PC-3 (cell line): ENCODE measurements at regions of chr2 and their contacts with region 1.

Region 1: GRCh38 chr2:112481050-112481527 is 867 bp upstream of the TTL start:
- DNase-seq: peak; percentile 86
- ATAC-seq: peak; percentile 79
- H3K4me3 ChIP-seq: peak overlapping the region; percentile 82
- H3K27ac ChIP-seq: peak overlapping the region; percentile 52
- H3K4me1 ChIP-seq: peaks cover 17% of the 10 kb centered on the region
- H3K27me3 ChIP-seq: no peaks in the 10 kb centered on the region
- CTCF ChIP-seq: peak; percentile 75

Region 2: GRCh38 chr2:112493048-112493447 is 12.0 kb after region 1 on chr2:
- CTCF ChIA-PET with region 1: interaction called, 12 read pairs
- POLR2A ChIA-PET with region 1: no interaction called
- intact Hi-C with region 1: no loop called
- DNase-seq: peak; percentile 25
- ATAC-seq: peak; percentile 30
- H3K4me3 ChIP-seq: no peak overlapping the region; the same call in 1 of the 2 replicates
- H3K27ac ChIP-seq: peak overlapping the region; percentile 84
- H3K4me1 ChIP-seq: peaks cover 44% of the 10 kb centered on the region
- H3K27me3 ChIP-seq: no peaks in the 10 kb centered on the region
- CTCF ChIP-seq: peak; percentile 32

Region 3: GRCh38 chr2:112519506-112519905 is 38.4 kb after region 1 on chr2:
- CTCF ChIA-PET with region 1: no interaction called
- POLR2A ChIA-PET with region 1: no interaction called
- intact Hi-C with region 1: no loop called
- DNase-seq: no peak
- ATAC-seq: no peak
- H3K4me3 ChIP-seq: no peak overlapping the region
- H3K27ac ChIP-seq: no peak overlapping the region
- H3K4me1 ChIP-seq: no peaks in the 10 kb centered on the region
- H3K27me3 ChIP-seq: no peaks in the 10 kb centered on the region
- CTCF ChIP-seq: no peak

Region 4: GRCh38 chr2:112542123-112542983 is 61.3 kb after region 1 on chr2 and contains the start of gene POLR1B:
- CTCF ChIA-PET with region 1: no interaction called
- POLR2A ChIA-PET with region 1: no interaction called
- intact Hi-C with region 1: loop called (anchors 1 kb)
- DNase-seq: peak; percentile 89
- ATAC-seq: peak; percentile 88
- H3K4me3 ChIP-seq: peak within 1 kb of the TSS; percentile 84
- H3K27ac ChIP-seq: peak within 1 kb of the TSS; percentile 79
- H3K4me1 ChIP-seq: peaks cover 16% of the 10 kb centered on the region
- H3K27me3 ChIP-seq: no peaks in the 10 kb centered on the region
- CTCF ChIP-seq: no peak
- total RNA-seq, gene POLR1B: 31.6 and 31.7 TPM in 2 replicates

Region 5: DNA sequence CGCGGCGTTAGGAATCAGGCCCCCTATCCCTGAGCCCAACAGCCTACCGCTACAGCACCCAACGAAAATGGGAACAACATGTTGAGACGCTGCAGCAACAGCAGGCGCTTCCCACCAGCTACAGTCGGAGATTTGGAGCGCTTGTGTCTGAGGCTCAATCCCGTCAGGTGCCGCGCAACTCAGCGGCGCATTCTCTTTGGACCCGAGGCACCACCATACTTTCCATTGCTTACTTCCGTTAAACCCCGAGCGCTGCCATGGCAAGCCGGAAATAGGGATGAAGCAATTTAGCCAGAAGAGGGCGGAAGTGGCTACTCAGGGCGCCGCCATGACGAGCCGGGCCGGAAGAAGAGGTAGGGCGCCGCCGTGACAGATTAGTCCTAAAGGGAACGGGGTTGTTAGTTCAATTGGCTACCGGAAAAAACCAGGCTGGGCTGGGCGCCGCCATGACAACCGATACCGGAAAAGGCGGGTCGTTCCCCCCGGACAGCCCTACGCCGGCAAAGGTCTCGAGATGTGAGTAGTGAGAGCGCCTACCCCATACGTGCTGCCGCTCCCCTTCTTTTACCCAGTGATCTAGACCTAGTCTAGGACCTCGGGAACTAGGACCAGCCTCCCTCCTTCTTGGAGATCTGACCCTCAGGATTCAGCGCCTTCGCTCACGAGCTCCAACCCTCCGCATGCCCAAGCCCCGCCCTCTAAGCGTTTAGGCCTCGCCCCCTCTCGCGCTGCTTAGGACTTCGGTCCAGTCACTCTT is 103.2 kb after region 1 on chr2 and contains the start of gene CHCHD5:
- CTCF ChIA-PET with region 1: interaction called, 16 read pairs
- POLR2A ChIA-PET with region 1: no interaction called
- intact Hi-C with region 1: loop called (anchors 1 kb)
- DNase-seq: peak; percentile 94
- ATAC-seq: peak; percentile 83
- H3K4me3 ChIP-seq: peak within 1 kb of the TSS; percentile 86
- H3K27ac ChIP-seq: peak within 1 kb of the TSS; percentile 95
- H3K4me1 ChIP-seq: peaks cover 31% of the 10 kb centered on the region
- H3K27me3 ChIP-seq: no peaks in the 10 kb centered on the region
- CTCF ChIP-seq: no peak
- total RNA-seq, gene CHCHD5: 25.4 and 27.9 TPM in 2 replicates